K562 (cell line): ENCODE measurements at regions of chr4 and their contacts with region 1.

Region 1: DNA sequence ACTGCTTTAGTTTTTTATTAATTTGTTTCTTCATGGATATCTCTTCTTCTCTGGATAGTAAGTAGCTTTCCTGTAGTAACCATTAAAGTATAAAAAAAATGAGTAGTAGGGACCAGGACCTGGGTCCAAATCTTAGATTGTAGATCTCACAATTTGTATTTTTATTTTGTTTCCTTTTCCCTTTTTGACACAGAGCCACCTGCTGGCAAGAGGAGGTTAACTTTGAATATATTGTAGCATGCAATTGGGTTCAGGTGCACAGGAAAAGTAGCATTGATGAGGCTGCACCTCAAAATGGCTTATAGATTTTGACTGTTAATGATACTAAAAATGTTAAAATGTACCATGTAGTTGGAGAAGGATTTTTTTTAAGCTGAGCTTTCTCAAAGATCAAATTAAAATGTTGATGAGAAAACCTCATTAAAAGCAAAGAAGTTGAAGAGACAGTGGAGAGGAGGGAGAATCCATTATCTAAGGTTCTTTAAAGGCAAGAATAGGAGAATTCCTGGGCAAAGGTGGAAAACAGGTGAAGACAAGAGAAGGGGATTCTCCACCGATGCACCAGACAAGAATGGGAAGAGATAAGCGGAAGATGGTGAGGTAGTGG is 48.3 kb upstream of the HPGDS start:
- DNase-seq: peak in 3 of 4 experiments; percentile 23 to 42 (median 26)
- ATAC-seq: peak; percentile 68
- H3K4me3 ChIP-seq: no peak overlapping the region
- H3K27ac ChIP-seq: no peak overlapping the region
- H3K4me1 ChIP-seq: no peaks in the 10 kb centered on the region; a peak in 1 of 5 replicates
- H3K27me3 ChIP-seq: no peaks in the 10 kb centered on the region
- CTCF ChIP-seq: peak; percentile 48 to 65 (median 54); a peak in 4 of 6 replicates
- EP300 ChIP-seq: no peak
- POLR2A ChIP-seq: no peak
- RAD21 ChIP-seq: peak; percentile 47 to 62

Region 2: GRCh38 chr4:94304365-94304971 is 86.4 kb before region 1 on chr4:
- CTCF ChIA-PET with region 1: interaction called, 10 read pairs
- POLR2A ChIA-PET with region 1: no interaction called
- in situ Hi-C with region 1: no loop called
- intact Hi-C with region 1: loop called (anchors 2 kb)
- DNase-seq: peak in 3 of 4 experiments; percentile 15 to 59 (median 27)
- ATAC-seq: peak; percentile 85
- H3K4me3 ChIP-seq: no peak overlapping the region
- H3K27ac ChIP-seq: no peak overlapping the region
- H3K4me1 ChIP-seq: peaks cover 0 to 13% of the 10 kb centered on the region in 2 experiments; a peak in 2 of 5 replicates
- H3K27me3 ChIP-seq: no peaks in the 10 kb centered on the region
- CTCF ChIP-seq: peak; percentile 53 to 80 (median 58); a peak in 5 of 6 replicates
- EP300 ChIP-seq: no peak
- POLR2A ChIP-seq: no peak
- RAD21 ChIP-seq: peak; percentile 65 to 79

Region 3: DNA sequence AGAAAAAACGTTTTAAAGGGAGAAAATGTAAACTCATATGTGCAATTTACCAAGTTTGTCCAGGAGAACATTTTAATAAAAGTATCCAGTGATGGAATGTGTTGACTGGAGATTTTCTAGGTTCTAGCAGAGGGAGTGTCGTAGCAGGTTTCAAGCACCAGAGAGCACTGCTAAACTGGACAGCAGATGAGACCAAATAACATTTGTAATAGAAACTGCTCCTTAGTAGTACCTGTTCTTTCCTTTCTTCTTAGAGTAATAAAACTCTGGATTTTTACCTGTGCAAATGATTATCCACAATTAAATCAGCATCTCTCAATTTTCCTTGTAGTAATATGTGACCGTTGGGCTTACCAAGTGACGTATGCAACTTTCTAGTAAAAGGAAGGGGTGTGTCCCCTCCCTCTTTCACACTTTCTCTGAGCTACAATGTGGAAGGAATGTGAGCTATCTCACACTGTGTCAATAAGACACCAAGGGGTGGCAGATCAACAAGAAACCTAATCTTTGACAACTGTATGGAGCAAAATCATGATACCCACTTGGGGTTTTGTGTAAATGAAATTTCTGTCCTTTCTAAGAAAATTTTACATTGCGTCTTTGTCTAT is 57.8 kb before region 1 on chr4:
- CTCF ChIA-PET with region 1: interaction called, 6 read pairs
- POLR2A ChIA-PET with region 1: no interaction called
- in situ Hi-C with region 1: no loop called
- intact Hi-C with region 1: loop called (anchors 1 kb)
- DNase-seq: peak in 2 of 4 experiments; percentile 24 to 46
- ATAC-seq: peak; percentile 85
- H3K4me3 ChIP-seq: no peak overlapping the region
- H3K27ac ChIP-seq: no peak overlapping the region
- H3K4me1 ChIP-seq: peaks cover 0 to 3% of the 10 kb centered on the region in 2 experiments; a peak in 2 of 5 replicates
- H3K27me3 ChIP-seq: no peaks in the 10 kb centered on the region; a peak in 1 of 5 replicates
- CTCF ChIP-seq: peak; percentile 57 to 64 (median 61)
- EP300 ChIP-seq: no peak
- POLR2A ChIP-seq: no peak
- RAD21 ChIP-seq: peak; percentile 70 to 80

Region 4: DNA sequence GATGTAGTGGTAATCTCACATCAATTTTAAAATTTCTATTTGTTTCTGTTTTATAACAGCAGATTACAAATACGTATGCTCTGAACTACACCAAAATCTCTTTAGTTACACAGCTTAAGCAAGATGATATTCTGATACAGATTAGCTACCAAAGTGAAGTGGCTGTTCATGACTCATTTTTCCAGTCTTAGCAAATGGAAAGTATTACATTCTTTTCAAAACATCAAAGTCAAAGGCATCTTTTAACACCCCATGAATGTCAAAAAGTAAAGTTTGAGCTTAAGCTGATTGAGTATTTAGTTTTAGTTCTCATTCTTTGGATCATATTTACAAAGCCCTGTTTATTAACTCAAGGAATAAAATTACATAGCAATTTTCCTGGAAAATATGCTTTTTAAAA is 41.7 kb before region 1 on chr4:
- CTCF ChIA-PET with region 1: no interaction called
- POLR2A ChIA-PET with region 1: no interaction called
- in situ Hi-C with region 1: no loop called
- intact Hi-C with region 1: loop called (anchors 5 kb)
- DNase-seq: no peak
- ATAC-seq: peak; percentile 25; the same call in 1 of the 3 replicates
- H3K4me3 ChIP-seq: no peak overlapping the region
- H3K27ac ChIP-seq: no peak overlapping the region; the same call in 2 of the 3 replicates
- H3K4me1 ChIP-seq: peaks cover 0 to 19% of the 10 kb centered on the region in 2 experiments; a peak in 2 of 5 replicates
- H3K27me3 ChIP-seq: no peaks in the 10 kb centered on the region
- CTCF ChIP-seq: no peak
- EP300 ChIP-seq: no peak
- POLR2A ChIP-seq: no peak
- RAD21 ChIP-seq: no peak